ENCODE measurements at regions of chr15 and their contacts with region 1.

Region 1: GRCh38 chr15:38266247-38266986 is 13.8 kb downstream of the SPRED1 start:
- DNase-seq: no peak
- ATAC-seq: no peak
- H3K4me3 ChIP-seq: no peak overlapping the region
- H3K27ac ChIP-seq: no peak overlapping the region
- H3K4me1 ChIP-seq: peaks cover 45% of the 10 kb centered on the region
- H3K27me3 ChIP-seq: no peaks in the 10 kb centered on the region
- CTCF ChIP-seq: no peak

Region 2: GRCh38 chr15:38129531-38130204 is 136.7 kb before region 1 on chr15:
- intact Hi-C with region 1: loop called (anchors 10 kb)
- DNase-seq: peak; percentile 67
- ATAC-seq: peak; percentile 76 to 84
- H3K4me3 ChIP-seq: peak overlapping the region; percentile 22
- H3K27ac ChIP-seq: peak overlapping the region; percentile 77
- H3K4me1 ChIP-seq: peaks cover 34% of the 10 kb centered on the region
- H3K27me3 ChIP-seq: no peaks in the 10 kb centered on the region
- CTCF ChIP-seq: no peak

Measured in lower lobe of right lung (tissue), 2 donors.